ENCODE measurements at regions of chr6 and their contacts with region 1.

Region 1: DNA sequence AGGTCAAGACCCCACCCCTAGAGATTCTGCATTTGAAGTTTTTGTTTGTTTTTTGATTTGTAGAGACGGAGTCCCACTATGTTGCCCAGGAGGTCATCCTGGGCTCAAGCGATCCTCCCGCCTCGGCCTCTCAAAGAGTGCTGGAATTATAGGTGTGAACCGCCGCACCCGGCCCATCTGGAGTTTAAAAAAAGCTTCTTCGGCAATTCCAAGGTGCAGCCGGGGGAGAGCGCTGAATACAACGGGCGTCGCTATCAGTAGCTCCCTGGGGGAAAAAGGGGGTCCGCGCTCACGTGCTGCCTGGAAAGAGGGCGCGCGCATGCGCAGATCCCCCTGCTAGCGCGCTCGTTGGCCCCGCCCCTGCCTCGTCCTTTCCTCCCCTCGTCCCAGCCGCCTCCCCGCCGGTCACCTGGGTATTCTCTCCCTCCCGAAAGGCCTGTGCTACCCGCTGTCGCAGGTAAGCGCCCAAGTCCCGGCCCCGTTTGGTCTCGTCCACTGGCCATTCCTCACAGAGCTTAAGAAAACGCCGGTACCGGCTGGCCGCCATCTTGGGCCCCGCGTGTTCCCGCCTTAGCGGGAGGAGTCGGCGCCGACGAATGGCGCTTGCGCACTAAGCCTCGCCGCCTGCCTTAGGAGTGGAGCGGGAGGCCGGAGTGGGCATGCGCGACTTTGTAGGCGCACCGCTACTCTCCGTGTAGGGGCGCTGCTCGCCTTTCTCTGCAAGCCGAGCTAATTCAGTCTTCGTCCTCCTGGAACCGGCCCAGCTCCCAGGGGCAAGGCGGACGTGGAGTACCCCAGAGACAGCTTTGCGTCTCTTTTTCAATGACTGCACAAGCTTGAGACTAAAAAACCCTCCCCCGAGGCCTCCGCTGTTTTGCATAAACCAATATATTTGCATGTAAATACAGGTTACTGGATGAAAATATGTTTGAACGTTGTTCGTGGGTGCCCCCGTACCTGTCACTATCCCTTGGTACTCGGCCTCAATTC is at the start of gene UQCC2:
- DNase-seq: peak; percentile 99
- ATAC-seq: peak; percentile 87
- H3K4me3 ChIP-seq: peak within 1 kb of the TSS; percentile 62 to 96 (median 93)
- H3K4me3 Mint-ChIP-seq: peak within 1 kb of the TSS; percentile 87
- H3K27ac ChIP-seq: peak within 1 kb of the TSS; percentile 83 to 88
- H3K27ac Mint-ChIP-seq: peak within 1 kb of the TSS; percentile 93
- H3K4me1 ChIP-seq: peaks cover 16 to 28% of the 10 kb centered on the region in 2 donors
- H3K4me1 Mint-ChIP-seq: peaks cover 33% of the 10 kb centered on the region
- H3K27me3 ChIP-seq: no peaks in the 10 kb centered on the region
- H3K27me3 Mint-ChIP-seq: no peaks in the 10 kb centered on the region
- CTCF ChIP-seq: peak; percentile 44
- total RNA-seq, gene UQCC2: 16.6 and 17.1 TPM in 2 replicates

Region 2: GRCh38 chr6:34027445-34027936 is 316.1 kb after region 1 on chr6:
- CTCF ChIA-PET with region 1: interaction called, 15 read pairs
- POLR2A ChIA-PET with region 1: no interaction called
- intact Hi-C with region 1: loop called (anchors 1 kb)
- DNase-seq: peak; percentile 67
- ATAC-seq: peak; percentile 70
- H3K4me3 ChIP-seq: no peak overlapping the region
- H3K4me3 Mint-ChIP-seq: no peak overlapping the region
- H3K27ac ChIP-seq: no peak overlapping the region
- H3K27ac Mint-ChIP-seq: no peak overlapping the region
- H3K4me1 ChIP-seq: peaks cover 0 to 6% of the 10 kb centered on the region in 2 donors
- H3K4me1 Mint-ChIP-seq: peaks cover 4% of the 10 kb centered on the region
- H3K27me3 ChIP-seq: peaks cover 0 to 5% (median 0%) of the 10 kb centered on the region in 4 experiments
- H3K27me3 Mint-ChIP-seq: peaks cover 12% of the 10 kb centered on the region
- CTCF ChIP-seq: peak; percentile 78